ENCODE measurements at regions of chr4 and their contacts with region 1.

Region 1: DNA sequence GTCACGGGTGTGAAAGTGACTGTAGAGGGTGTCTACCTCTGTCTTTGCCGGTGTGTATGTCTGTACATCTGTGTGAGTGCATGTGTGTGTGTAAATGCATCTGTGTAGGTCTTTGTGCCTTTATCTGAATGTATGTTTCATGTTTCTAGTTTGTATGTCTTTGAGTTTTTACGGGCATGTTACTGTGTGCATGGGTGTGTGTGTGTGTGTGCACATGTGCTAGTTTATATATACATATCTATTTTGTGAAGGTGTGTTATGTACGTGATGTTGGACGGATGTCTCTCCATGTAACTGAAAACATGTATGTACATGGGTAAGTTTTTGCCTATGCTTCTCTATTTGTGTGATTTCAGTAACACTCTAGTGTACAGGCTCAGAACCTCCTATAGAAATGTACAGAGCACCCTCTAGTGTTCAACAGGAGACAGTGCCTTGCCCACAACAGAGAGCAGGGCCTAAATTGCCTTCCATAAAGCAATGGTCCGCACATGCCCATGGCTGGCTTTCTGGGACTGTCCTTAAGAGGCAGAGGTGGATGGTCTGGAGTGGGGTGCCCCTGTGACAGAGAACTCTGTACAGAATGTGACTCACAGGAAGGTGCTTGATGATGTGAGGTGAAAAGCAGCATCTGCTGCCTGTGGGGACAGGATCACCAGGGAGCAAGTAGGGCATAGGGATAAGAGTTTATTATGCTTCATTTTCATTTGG is 343.5 kb downstream of the RAPGEF2 start:
- DNase-seq: peak; percentile 73
- ATAC-seq: peak; percentile 96

Region 2: GRCh38 chr4:158274636-158275035 is 1171.8 kb before region 1 on chr4:
- intact Hi-C with region 1: loop called (anchors 5 kb)
- DNase-seq: no peak
- ATAC-seq: no peak

Region 3: DNA sequence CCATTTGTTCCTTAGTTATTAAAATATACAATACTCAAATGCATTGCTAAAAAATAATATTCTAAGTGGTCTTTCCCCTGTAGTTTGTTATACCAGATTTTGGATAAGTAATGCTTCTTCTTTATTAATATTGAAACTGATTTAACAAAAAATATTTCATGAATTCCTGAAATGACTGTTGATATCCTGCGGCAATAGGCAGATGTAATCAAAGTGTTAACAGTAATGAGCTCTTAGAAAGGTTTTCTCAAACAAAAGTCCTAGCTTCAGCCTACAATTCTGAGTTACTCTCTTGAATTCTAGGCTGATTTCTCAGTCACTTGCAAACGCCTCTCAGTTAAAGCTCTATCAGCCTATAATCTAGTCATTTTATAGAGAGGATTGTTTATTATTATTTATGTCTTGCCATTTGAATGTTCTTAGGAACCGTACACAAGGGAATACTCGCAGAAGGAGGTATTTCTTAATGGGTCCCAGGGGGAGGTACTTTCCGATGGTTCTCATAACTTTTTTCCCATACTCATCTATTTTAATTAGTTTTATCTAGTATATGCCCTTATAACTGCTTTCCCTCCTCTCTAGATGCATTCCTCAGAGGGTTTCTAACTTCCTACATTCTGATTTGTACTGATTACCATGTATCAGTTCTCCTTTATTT is 580.8 kb before region 1 on chr4:
- intact Hi-C with region 1: loop called (anchors 2 kb)
- DNase-seq: no peak
- ATAC-seq: no peak

Region 4: DNA sequence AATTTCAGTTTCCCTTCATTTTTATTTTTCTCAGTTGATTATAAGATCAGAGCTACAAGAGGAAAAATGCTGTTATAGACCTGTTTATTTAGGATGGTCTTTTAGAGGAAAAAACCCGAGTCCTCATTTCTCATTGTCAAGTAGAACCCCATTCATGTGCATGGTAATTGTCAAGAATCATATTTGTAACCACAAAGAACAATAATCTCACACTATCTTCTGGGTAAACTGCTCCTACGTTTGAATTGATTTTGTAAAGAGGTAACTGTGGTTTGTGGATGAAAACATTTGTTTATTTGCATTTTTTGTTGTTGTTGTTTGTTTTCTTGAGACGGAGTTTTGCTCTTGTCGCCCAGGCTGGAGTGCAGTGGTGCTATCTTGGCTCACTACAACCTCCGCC is 319.7 kb before region 1 on chr4:
- intact Hi-C with region 1: no loop called
- DNase-seq: no peak
- ATAC-seq: no peak

Region 5: GRCh38 chr4:159240687-159241086 is 205.7 kb before region 1 on chr4:
- intact Hi-C with region 1: no loop called
- DNase-seq: no peak
- ATAC-seq: peak; percentile 26

Region 6: GRCh38 chr4:159283696-159284492 is 162.5 kb before region 1 on chr4:
- intact Hi-C with region 1: loop called (anchors 10 kb)
- DNase-seq: no peak
- ATAC-seq: no peak

Measured in Right ventricle myocardium inferior (tissue), 1 donor.